ENCODE measurements at regions of chr1 and their contacts with region 1.

Region 1: GRCh38 chr1:38990738-38991639 is at the start of gene AKIRIN1:
- DNase-seq: peak; percentile 99
- H3K4me3 ChIP-seq: peak within 1 kb of the TSS; percentile 97
- H3K27ac ChIP-seq: peak within 1 kb of the TSS; percentile 94
- H3K4me1 ChIP-seq: no peaks in the 10 kb centered on the region
- H3K27me3 ChIP-seq: no peaks in the 10 kb centered on the region
- CTCF ChIP-seq: no peak
- total RNA-seq, gene AKIRIN1: 48.0 to 70.2 TPM

Region 2: GRCh38 chr1:38680801-38681510 is 310.0 kb before region 1 on chr1:
- intact Hi-C with region 1: no loop called
- DNase-seq: no peak
- H3K4me3 ChIP-seq: no peak overlapping the region
- H3K27ac ChIP-seq: no peak overlapping the region
- H3K4me1 ChIP-seq: no peaks in the 10 kb centered on the region
- H3K27me3 ChIP-seq: no peaks in the 10 kb centered on the region
- CTCF ChIP-seq: no peak

Region 3: GRCh38 chr1:38727684-38728584 is 263.1 kb before region 1 on chr1:
- intact Hi-C with region 1: no loop called
- DNase-seq: peak; percentile 54
- H3K4me3 ChIP-seq: no peak overlapping the region
- H3K27ac ChIP-seq: peak overlapping the region; percentile 3
- H3K4me1 ChIP-seq: no peaks in the 10 kb centered on the region
- H3K27me3 ChIP-seq: no peaks in the 10 kb centered on the region
- CTCF ChIP-seq: no peak

Region 4: DNA sequence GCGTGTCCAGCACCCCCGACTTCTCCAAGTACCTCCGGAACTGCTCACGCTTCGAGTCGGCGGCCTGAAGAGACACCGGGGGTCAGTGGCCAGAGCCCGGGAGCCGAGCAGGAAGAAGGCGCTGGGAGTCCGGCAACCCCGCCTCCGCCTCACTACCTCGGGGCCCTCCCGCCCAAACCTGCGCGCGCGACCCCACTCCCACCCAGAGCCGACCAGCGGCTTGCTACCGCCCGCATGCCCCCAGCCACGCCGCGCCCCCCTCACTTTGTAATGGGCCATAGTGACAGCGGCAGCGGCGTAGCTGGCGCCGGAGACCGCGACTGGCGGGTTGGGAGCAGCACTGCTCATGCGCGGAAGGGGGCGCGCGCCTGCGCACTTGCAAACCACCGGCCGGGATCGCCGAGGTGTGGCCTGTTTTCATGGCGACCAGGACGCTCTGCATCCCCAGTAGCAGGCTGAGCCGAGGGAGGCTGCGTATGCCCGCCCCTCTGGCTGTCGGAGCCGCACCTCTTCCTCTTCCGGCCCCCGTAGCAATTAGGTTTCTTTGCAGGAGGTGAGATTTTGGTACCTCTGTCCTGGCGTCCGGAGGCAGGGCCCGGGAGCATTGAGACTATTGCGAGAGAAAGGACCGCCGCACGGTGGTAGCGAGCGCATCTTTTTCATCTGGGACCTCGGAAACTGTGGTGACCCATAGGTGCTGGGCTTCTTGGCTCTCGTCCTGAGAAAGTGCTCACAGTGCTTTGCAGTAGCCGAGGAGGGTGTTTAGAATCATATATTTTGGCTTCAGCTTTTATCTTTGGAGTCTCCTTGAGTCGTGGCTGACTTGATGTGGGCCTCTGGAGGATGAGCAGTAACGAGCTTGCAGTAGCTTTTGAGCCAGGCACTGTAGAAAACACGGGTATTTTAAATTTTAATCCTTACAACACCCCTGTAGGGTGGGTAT is 117.7 kb before region 1 on chr1 and contains the start of gene MYCBP:
- intact Hi-C with region 1: loop called (anchors 10 kb)
- DNase-seq: peak; percentile 96
- H3K4me3 ChIP-seq: peak within 1 kb of the TSS; percentile 84
- H3K27ac ChIP-seq: peak within 1 kb of the TSS; percentile 52
- H3K4me1 ChIP-seq: no peaks in the 10 kb centered on the region
- H3K27me3 ChIP-seq: no peaks in the 10 kb centered on the region
- CTCF ChIP-seq: no peak
- total RNA-seq, gene MYCBP: 42.0 to 55.1 TPM

Measured in colonic mucosa (tissue), 4 donors.